ENCODE measurements at regions of chr3 and their contacts with region 1.

Region 1: GRCh38 chr3:172332256-172333041 is 115.8 kb downstream of the GHSR start:
- H3K4me3 Mint-ChIP-seq: no peak overlapping the region
- H3K27ac Mint-ChIP-seq: no peak overlapping the region
- H3K4me1 Mint-ChIP-seq: peaks cover 9% of the 10 kb centered on the region
- H3K27me3 Mint-ChIP-seq: no peaks in the 10 kb centered on the region

Region 2: DNA sequence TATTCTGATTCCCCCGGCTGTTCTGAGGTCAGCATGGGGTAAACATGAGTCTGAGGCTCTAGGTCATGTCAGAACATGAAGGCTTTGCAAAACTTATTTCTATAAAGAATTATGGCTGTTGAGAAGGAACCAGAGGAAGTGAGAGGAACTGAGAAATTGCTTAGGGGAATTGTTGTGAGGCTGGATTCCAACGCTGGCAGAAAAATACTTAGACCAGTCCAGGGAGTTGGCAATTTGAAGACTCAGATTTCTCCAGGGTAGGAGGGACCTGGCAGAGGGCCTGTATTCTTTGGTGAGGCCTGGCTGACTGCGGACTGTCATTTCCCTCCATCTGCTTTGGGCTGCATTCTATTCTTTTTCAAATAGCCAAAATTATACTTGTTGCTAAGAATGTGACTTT is 677.6 kb before region 1 on chr3:
- intact Hi-C with region 1: loop called (anchors 5 kb)
- H3K4me3 Mint-ChIP-seq: no peak overlapping the region
- H3K27ac Mint-ChIP-seq: peak overlapping the region; percentile 80
- H3K4me1 Mint-ChIP-seq: peaks cover 24% of the 10 kb centered on the region
- H3K27me3 Mint-ChIP-seq: no peaks in the 10 kb centered on the region

Measured in dendritic cell treated with granulocyte-macrophage colony-stimulating factor and Interleukin-4, amounts not matched to agents 40 ng/mL and 50 ng/mL, for 4 days (primary cell).